Mammary epithelial cell (primary cell): ENCODE measurements at regions of chr18 and their contacts with region 1.

Region 1: DNA sequence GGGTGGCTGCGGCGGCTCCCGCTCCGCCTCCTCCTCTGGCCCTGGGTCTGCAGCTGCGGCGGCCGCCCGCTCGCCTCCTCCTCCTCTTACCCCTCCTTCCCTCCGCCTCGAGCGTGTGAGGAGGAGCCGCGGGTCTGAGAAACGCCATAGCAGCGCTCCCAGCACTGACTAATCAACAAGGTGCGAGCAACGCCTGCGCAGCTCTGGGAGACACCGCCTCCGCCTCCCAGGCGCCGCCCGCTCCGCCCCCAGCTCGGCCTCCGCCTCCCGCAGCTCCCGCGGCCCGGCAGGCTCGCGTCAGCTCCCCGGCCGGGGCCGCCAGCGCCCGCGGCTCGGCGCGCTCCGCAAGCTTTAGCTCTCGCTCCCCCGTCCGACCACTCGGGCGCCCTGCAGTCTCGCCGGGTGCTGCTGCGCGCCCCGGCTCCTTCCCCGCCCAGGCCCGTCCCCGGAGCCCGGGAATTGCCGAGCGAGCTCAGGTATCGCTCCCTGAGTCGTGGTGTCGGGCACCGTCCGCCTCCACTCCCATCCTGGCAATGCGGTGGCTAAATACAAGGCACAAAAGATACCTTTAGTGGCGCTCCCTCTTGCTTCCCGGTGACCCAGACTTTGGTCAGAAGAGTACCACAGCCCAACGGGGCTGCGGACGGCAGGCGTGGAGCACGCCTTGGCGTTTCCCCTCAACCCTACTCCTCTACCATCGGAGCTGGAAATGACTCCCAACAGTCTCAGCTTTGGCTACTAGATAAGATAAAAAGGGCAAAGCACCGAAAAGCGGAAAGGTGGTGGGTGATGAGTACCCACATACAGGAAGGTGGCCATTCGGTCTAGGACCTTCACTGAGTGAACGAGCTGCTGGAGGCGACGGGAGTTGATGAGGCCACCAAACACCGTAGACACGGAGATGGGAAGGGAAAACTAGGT is at the start of gene GAREM1:
- DNase-seq: peak; percentile 97
- H3K4me3 ChIP-seq: peak within 1 kb of the TSS; percentile 70 to 89 (median 74)
- H3K27ac ChIP-seq: peak within 1 kb of the TSS; percentile 9
- H3K4me1 ChIP-seq: peaks cover 12% of the 10 kb centered on the region
- H3K27me3 ChIP-seq: no peaks in the 10 kb centered on the region
- CTCF ChIP-seq: peak; percentile 35 to 71
- total RNA-seq, gene GAREM1: 6.8 to 9.0 TPM

Region 2: GRCh38 chr18:32158108-32158624 is 312.8 kb before region 1 on chr18:
- CTCF ChIA-PET with region 1: interaction called, 11 read pairs
- dilution Hi-C with region 1: no loop called
- in situ Hi-C with region 1: no loop called
- intact Hi-C with region 1: loop called (anchors 1 kb)
- DNase-seq: peak; percentile 71
- H3K4me3 ChIP-seq: peak overlapping the region in 1 of 3 experiments; percentile 31
- H3K27ac ChIP-seq: no peak overlapping the region
- H3K4me1 ChIP-seq: peaks cover 5% of the 10 kb centered on the region
- H3K27me3 ChIP-seq: no peaks in the 10 kb centered on the region
- CTCF ChIP-seq: peak; percentile 76 to 78

Region 3: GRCh38 chr18:32289483-32290075 is 181.4 kb before region 1 on chr18:
- CTCF ChIA-PET with region 1: interaction called, 47 read pairs
- dilution Hi-C with region 1: no loop called
- in situ Hi-C with region 1: loop called (anchors 5 kb)
- intact Hi-C with region 1: loop called (anchors 1 kb)
- DNase-seq: peak; percentile 53
- H3K4me3 ChIP-seq: no peak overlapping the region
- H3K27ac ChIP-seq: no peak overlapping the region
- H3K4me1 ChIP-seq: peaks cover 6% of the 10 kb centered on the region
- H3K27me3 ChIP-seq: no peaks in the 10 kb centered on the region
- CTCF ChIP-seq: peak; percentile 65 to 83

Region 4: GRCh38 chr18:32383050-32383819 is 87.7 kb before region 1 on chr18:
- CTCF ChIA-PET with region 1: no interaction called
- dilution Hi-C with region 1: no loop called
- in situ Hi-C with region 1: no loop called
- intact Hi-C with region 1: loop called (anchors 1 kb)
- DNase-seq: peak; percentile 99
- H3K4me3 ChIP-seq: peak overlapping the region in 1 of 3 experiments; percentile 25
- H3K27ac ChIP-seq: peak overlapping the region; percentile 91
- H3K4me1 ChIP-seq: peaks cover 35% of the 10 kb centered on the region
- H3K27me3 ChIP-seq: no peaks in the 10 kb centered on the region
- CTCF ChIP-seq: no peak

Region 5: DNA sequence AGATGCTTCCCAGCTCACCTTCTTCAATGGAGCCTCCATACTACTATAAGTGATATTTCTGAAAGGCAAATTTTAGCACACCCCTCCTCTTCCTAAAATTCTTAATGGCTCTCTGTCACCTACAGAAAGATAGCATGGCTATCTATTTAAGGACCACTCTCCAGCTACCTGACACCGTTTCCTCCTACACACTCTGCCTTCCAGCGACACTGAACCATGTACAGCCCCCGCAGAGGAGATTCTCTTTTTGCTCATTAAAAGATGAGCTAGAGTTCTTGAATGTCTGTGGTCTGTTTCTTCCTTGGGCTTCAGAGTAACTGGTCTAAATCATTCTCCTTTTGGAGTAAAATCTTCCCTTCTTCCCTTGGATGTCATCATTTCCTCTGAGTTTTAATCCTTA is 38.1 kb after region 1 on chr18:
- CTCF ChIA-PET with region 1: no interaction called
- dilution Hi-C with region 1: no loop called
- in situ Hi-C with region 1: no loop called
- intact Hi-C with region 1: no loop called
- DNase-seq: no peak
- H3K4me3 ChIP-seq: no peak overlapping the region
- H3K27ac ChIP-seq: no peak overlapping the region
- H3K4me1 ChIP-seq: no peaks in the 10 kb centered on the region
- H3K27me3 ChIP-seq: no peaks in the 10 kb centered on the region
- CTCF ChIP-seq: no peak

Region 6: DNA sequence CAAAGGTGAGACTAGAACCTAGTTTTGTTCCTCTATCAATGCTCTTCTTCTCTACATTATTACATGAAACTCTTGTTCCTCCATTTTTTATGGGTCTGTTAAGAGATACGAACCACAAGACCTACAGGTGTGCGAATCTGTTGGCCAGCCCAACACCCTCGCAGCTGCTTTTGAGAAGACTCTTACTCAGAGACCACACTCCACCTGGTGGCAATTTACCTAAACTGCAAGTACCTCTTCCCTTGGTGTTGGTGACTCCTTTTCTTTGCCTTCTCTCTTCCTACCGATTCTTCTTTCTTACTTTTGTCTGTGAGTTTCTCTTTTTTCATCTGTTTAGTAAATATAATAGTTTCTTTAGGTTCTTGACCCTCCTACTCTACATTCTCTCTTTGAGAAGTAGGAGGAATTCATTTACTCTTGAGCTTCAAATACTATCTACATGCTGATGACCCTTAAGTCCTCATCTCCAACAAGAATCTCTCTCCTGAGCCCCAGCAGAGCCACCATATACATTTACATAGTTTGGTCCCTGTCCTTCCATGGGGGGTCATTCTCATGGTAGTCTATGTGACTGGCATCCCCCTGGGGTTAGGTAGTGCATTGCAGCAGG is 81.6 kb after region 1 on chr18:
- CTCF ChIA-PET with region 1: interaction called, 9 read pairs
- dilution Hi-C with region 1: no loop called
- in situ Hi-C with region 1: no loop called
- intact Hi-C with region 1: loop called (anchors 2 kb)
- DNase-seq: peak; percentile 59
- H3K4me3 ChIP-seq: no peak overlapping the region
- H3K27ac ChIP-seq: no peak overlapping the region
- H3K4me1 ChIP-seq: no peaks in the 10 kb centered on the region
- H3K27me3 ChIP-seq: no peaks in the 10 kb centered on the region
- CTCF ChIP-seq: peak; percentile 81 to 82